Naive thymus-derived CD4-positive, alpha-beta T cell (primary cell): ENCODE measurements at regions of chr16 and their contacts with region 1.

Region 1: DNA sequence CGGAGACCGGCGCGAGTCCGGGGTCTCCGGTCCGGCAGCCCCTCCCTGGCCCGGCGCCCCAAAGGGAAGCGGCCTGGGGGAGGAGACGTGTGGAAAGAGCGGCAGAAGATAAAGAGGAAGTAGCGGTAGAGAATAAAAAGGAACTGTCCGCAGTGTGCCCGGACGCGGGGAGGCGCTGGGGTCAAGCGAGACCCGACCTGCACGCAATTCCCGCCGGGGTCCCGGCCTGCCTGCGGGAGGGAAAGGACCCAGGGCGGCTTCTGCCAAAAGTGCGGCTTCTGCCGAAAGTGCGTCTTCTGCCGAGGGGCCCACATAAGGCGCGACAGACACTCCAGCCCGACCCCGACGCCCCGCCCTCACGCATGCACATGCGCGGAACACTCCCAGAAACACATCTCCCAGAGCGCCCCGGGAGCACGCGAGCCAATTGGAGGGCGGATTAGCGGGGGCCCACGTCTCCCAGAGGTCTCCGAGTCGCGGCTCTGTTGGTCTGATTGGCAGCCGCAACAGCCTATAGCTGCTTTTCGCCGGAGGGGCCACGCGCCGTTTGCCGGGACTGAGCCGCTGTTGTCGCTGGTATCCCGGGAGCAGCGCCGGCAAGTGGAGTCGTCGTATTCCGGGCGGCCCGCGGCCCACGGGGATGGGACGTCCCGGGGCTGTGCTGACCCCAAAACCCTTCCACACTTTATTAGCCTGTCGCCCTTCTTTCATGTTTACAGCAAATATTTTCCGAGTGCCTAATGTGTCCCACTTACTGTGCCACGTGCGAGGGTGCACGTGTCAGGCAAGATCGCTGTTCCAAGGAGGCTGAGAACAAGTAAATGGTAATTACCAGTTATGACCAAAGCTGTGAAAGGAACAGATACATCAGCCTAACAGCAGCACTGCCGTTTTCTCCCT is 8.0 kb upstream of the MEFV start:
- DNase-seq: peak; percentile 88 to 97 (median 96)
- ATAC-seq: peak; percentile 88
- H3K4me3 ChIP-seq: peak overlapping the region; percentile 81
- H3K4me3 Mint-ChIP-seq: peak overlapping the region; percentile 84 to 97 (median 93)
- H3K27ac ChIP-seq: peak overlapping the region; percentile 92
- H3K27ac Mint-ChIP-seq: peak overlapping the region; percentile 93 to 98 (median 97)
- H3K4me1 ChIP-seq: peaks cover 18 to 20% of the 10 kb centered on the region in 2 donors
- H3K4me1 Mint-ChIP-seq: peaks cover 6 to 42% (median 29%) of the 10 kb centered on the region in 7 donors
- H3K27me3 ChIP-seq: no peaks in the 10 kb centered on the region
- H3K27me3 Mint-ChIP-seq: no peaks in the 10 kb centered on the region

Region 2: GRCh38 chr16:3173892-3174617 is 90.3 kb before region 1 on chr16:
- CTCF ChIA-PET with region 1: no interaction called
- POLR2A ChIA-PET with region 1: interaction called, 4 read pairs
- intact Hi-C with region 1: loop called in 1 of 2 experiments (anchors 1 kb)
- DNase-seq: no peak
- ATAC-seq: peak; percentile 13
- H3K4me3 ChIP-seq: no peak overlapping the region
- H3K4me3 Mint-ChIP-seq: peak overlapping the region in 9 of 10 donors; percentile 22 to 70 (median 54)
- H3K27ac ChIP-seq: no peak overlapping the region
- H3K27ac Mint-ChIP-seq: peak overlapping the region in 5 of 9 donors; percentile 2 to 71 (median 18)
- H3K4me1 ChIP-seq: peaks cover 29 to 39% of the 10 kb centered on the region in 2 donors
- H3K4me1 Mint-ChIP-seq: peaks cover 21 to 42% (median 34%) of the 10 kb centered on the region in 7 donors
- H3K27me3 ChIP-seq: peaks cover 3 to 37% of the 10 kb centered on the region in 2 donors
- H3K27me3 Mint-ChIP-seq: peaks cover 46 to 81% (median 53%) of the 10 kb centered on the region in 5 donors

Region 3: GRCh38 chr16:3214904-3215600 is 49.3 kb before region 1 on chr16:
- CTCF ChIA-PET with region 1: no interaction called
- POLR2A ChIA-PET with region 1: interaction called, 14 read pairs
- intact Hi-C with region 1: loop called in 1 of 2 experiments (anchors 1 kb)
- DNase-seq: peak in 7 of 9 donors; percentile 75 to 91 (median 87)
- ATAC-seq: peak; percentile 95
- H3K4me3 ChIP-seq: peak overlapping the region; percentile 38
- H3K4me3 Mint-ChIP-seq: peak overlapping the region; percentile 69 to 88 (median 76)
- H3K27ac ChIP-seq: peak overlapping the region; percentile 75
- H3K27ac Mint-ChIP-seq: peak overlapping the region; percentile 96 to 100 (median 99)
- H3K4me1 ChIP-seq: peaks cover 24 to 30% of the 10 kb centered on the region in 2 donors
- H3K4me1 Mint-ChIP-seq: peaks cover 30 to 51% (median 39%) of the 10 kb centered on the region in 7 donors
- H3K27me3 ChIP-seq: no peaks in the 10 kb centered on the region
- H3K27me3 Mint-ChIP-seq: no peaks in the 10 kb centered on the region

Region 4: GRCh38 chr16:3305109-3306068 is 41.0 kb after region 1 on chr16 and contains the starts of genes TIGD7 and ZNF75A:
- CTCF ChIA-PET with region 1: no interaction called
- POLR2A ChIA-PET with region 1: interaction called, 12 read pairs
- intact Hi-C with region 1: loop called (anchors 1 kb)
- DNase-seq: peak; percentile 69 to 89 (median 85)
- ATAC-seq: peak; percentile 96
- H3K4me3 ChIP-seq: peak within 1 kb of the TSS; percentile 78
- H3K4me3 Mint-ChIP-seq: peak within 1 kb of the TSS; percentile 78 to 87 (median 84)
- H3K27ac ChIP-seq: peak within 1 kb of the TSS; percentile 87
- H3K27ac Mint-ChIP-seq: peak within 1 kb of the TSS; percentile 62 to 92 (median 83)
- H3K4me1 ChIP-seq: peaks cover 12 to 13% of the 10 kb centered on the region in 2 donors
- H3K4me1 Mint-ChIP-seq: peaks cover 4 to 38% (median 19%) of the 10 kb centered on the region in 7 donors
- H3K27me3 ChIP-seq: no peaks in the 10 kb centered on the region
- H3K27me3 Mint-ChIP-seq: no peaks in the 10 kb centered on the region
- total RNA-seq, gene TIGD7: 4.9 to 18.4 (median 5.5) TPM
- total RNA-seq, gene ZNF75A: 27.7 to 90.6 (median 53.4) TPM

Region 5: GRCh38 chr16:3328643-3329042 is 64.3 kb after region 1 on chr16:
- CTCF ChIA-PET with region 1: no interaction called
- POLR2A ChIA-PET with region 1: no interaction called
- intact Hi-C with region 1: no loop called
- DNase-seq: no peak
- ATAC-seq: no peak
- H3K4me3 ChIP-seq: no peak overlapping the region
- H3K4me3 Mint-ChIP-seq: no peak overlapping the region
- H3K27ac ChIP-seq: no peak overlapping the region
- H3K27ac Mint-ChIP-seq: no peak overlapping the region
- H3K4me1 ChIP-seq: no peaks in the 10 kb centered on the region
- H3K4me1 Mint-ChIP-seq: no peaks in the 10 kb centered on the region
- H3K27me3 ChIP-seq: no peaks in the 10 kb centered on the region
- H3K27me3 Mint-ChIP-seq: no peaks in the 10 kb centered on the region

Region 6: GRCh38 chr16:3457434-3458252 is 193.3 kb after region 1 on chr16:
- CTCF ChIA-PET with region 1: no interaction called
- POLR2A ChIA-PET with region 1: no interaction called
- intact Hi-C with region 1: loop called (anchors 1 to 5 kb)
- DNase-seq: peak; percentile 87 to 95 (median 93)
- ATAC-seq: peak; percentile 96
- H3K4me3 ChIP-seq: peak overlapping the region; percentile 84
- H3K4me3 Mint-ChIP-seq: peak overlapping the region; percentile 78 to 88 (median 86)
- H3K27ac ChIP-seq: peak overlapping the region; percentile 96
- H3K27ac Mint-ChIP-seq: peak overlapping the region; percentile 74 to 94 (median 88)
- H3K4me1 ChIP-seq: peaks cover 37 to 45% of the 10 kb centered on the region in 2 donors
- H3K4me1 Mint-ChIP-seq: peaks cover 33 to 57% (median 48%) of the 10 kb centered on the region in 7 donors
- H3K27me3 ChIP-seq: no peaks in the 10 kb centered on the region
- H3K27me3 Mint-ChIP-seq: no peaks in the 10 kb centered on the region